CD4-positive, alpha-beta T cell (primary cell): ENCODE measurements at regions of chr19 and their contacts with region 1.

Region 1: GRCh38 chr19:39970675-39971379 is at the start of gene PSMC4:
- DNase-seq: peak; percentile 97 to 100 (median 98)
- ATAC-seq: peak; percentile 96
- H3K4me3 ChIP-seq: peak within 1 kb of the TSS; percentile 77
- H3K4me3 Mint-ChIP-seq: peak within 1 kb of the TSS; percentile 98
- H3K27ac ChIP-seq: peak within 1 kb of the TSS; percentile 87 to 91
- H3K27ac Mint-ChIP-seq: peak within 1 kb of the TSS; percentile 97
- H3K4me1 ChIP-seq: peaks cover 51% of the 10 kb centered on the region
- H3K4me1 Mint-ChIP-seq: peaks cover 58% of the 10 kb centered on the region
- H3K27me3 ChIP-seq: no peaks in the 10 kb centered on the region
- H3K27me3 Mint-ChIP-seq: no peaks in the 10 kb centered on the region
- CTCF ChIP-seq: peak; percentile 88
- total RNA-seq, gene PSMC4: 61.3 to 67.4 TPM

Region 2: DNA sequence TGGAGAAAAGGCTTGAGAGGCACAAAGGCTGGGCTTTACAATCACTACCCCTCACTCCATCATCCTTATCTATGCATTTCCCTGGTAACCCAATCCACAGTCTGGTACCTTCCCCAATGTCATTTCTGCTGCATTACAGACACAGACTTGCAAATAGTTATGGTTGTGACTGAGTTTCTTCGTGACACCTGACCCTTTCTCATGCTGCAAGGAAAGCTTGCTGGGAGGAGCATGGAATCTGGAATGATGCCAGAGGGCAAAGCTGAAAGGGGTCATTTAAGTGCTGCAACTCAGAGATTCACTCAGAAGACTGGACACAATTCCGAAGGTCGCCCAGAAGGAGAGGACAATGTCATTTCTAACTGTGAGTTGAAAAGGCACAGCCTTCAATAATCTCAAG is 315.2 kb before region 1 on chr19 and contains the start of gene LGALS16:
- CTCF ChIA-PET with region 1: no interaction called
- POLR2A ChIA-PET with region 1: no interaction called
- intact Hi-C with region 1: no loop called
- DNase-seq: no peak
- ATAC-seq: no peak
- H3K4me3 ChIP-seq: no peak within 1 kb of the TSS
- H3K4me3 Mint-ChIP-seq: no peak within 1 kb of the TSS
- H3K27ac ChIP-seq: no peak within 1 kb of the TSS
- H3K27ac Mint-ChIP-seq: no peak within 1 kb of the TSS
- H3K4me1 ChIP-seq: no peaks in the 10 kb centered on the region
- H3K4me1 Mint-ChIP-seq: no peaks in the 10 kb centered on the region
- H3K27me3 ChIP-seq: no peaks in the 10 kb centered on the region
- H3K27me3 Mint-ChIP-seq: peaks cover 67% of the 10 kb centered on the region
- CTCF ChIP-seq: no peak
- total RNA-seq, gene LGALS16: not detected

Region 3: GRCh38 chr19:39846176-39846677 is 124.6 kb before region 1 on chr19 and contains the start of gene FBL:
- CTCF ChIA-PET with region 1: interaction called, 11 read pairs
- POLR2A ChIA-PET with region 1: interaction called, 4 read pairs
- intact Hi-C with region 1: no loop called
- DNase-seq: peak; percentile 96 to 99 (median 98)
- ATAC-seq: peak; percentile 93
- H3K4me3 ChIP-seq: peak within 1 kb of the TSS; percentile 94
- H3K4me3 Mint-ChIP-seq: peak within 1 kb of the TSS; percentile 85
- H3K27ac ChIP-seq: peak within 1 kb of the TSS; percentile 87 to 89
- H3K27ac Mint-ChIP-seq: peak within 1 kb of the TSS; percentile 92
- H3K4me1 ChIP-seq: peaks cover 44% of the 10 kb centered on the region
- H3K4me1 Mint-ChIP-seq: peaks cover 55% of the 10 kb centered on the region
- H3K27me3 ChIP-seq: no peaks in the 10 kb centered on the region
- H3K27me3 Mint-ChIP-seq: no peaks in the 10 kb centered on the region
- CTCF ChIP-seq: no peak
- total RNA-seq, gene FBL: 267 to 287 TPM

Region 4: DNA sequence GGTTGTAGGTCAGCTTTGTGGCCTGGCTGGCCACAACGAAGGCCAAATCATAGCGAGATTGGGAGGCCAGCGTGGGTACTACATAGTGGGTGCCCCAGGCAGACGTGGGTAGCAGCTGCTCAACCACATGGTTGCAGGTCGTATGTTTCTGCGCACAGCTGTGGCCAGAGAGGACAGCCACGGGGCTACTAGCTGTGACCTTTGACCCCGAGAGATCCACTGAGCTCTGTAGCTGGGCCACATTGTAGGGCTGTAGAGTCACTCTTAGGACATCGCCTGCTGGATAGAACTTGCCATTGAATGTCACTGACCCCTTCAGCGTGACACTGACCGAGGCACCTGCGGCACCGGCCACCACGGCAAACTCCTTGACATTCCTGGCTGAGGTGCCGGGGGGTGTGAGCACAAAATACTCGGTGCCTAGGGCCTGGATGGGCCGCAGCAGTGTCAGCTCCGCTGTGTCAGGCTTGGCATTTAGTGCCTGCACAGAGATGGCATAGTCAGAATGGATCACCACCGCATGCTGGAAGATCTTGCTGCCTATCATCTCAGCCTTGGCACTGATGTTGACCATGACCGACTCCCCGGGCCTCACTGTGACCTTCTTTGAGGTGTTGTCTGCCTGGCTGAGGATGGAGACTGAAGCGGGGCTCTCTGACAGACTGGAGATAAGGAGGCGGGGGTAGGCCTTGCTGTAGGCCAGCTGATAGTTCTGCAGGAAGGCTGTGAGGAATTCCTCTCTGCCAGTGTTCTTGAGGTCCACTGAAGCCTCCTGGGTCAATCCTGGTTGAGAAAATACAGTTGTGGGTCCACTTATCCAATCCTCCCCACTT is 43.1 kb before region 1 on chr19:
- CTCF ChIA-PET with region 1: interaction called, 10 read pairs
- POLR2A ChIA-PET with region 1: interaction called, 12 read pairs
- intact Hi-C with region 1: loop called in 1 of 2 experiments (anchors 5 kb)
- DNase-seq: no peak
- ATAC-seq: no peak
- H3K4me3 ChIP-seq: no peak overlapping the region
- H3K4me3 Mint-ChIP-seq: no peak overlapping the region
- H3K27ac ChIP-seq: no peak overlapping the region
- H3K27ac Mint-ChIP-seq: peak overlapping the region; percentile 27
- H3K4me1 ChIP-seq: peaks cover 11% of the 10 kb centered on the region
- H3K4me1 Mint-ChIP-seq: peaks cover 46% of the 10 kb centered on the region
- H3K27me3 ChIP-seq: no peaks in the 10 kb centered on the region
- H3K27me3 Mint-ChIP-seq: no peaks in the 10 kb centered on the region
- CTCF ChIP-seq: no peak

Region 5: DNA sequence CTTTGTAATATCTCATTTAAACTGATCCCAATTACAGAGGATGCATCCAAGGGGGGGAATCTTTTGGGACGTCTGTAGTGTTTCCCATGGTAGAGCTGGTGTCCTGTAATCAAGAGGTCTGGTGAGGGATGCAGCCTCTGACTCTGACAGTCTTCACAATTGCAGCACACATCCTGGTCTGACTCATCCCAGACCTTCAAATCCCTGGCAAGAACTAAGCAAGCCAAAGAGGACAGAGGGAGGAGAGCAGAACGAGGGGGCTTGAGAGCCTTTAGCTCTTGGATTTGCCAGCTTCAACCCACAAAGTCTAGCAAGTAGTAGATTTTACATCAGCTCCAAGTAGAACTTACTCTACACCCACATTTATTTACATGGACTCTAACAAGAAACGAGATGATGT is 19.1 kb before region 1 on chr19:
- CTCF ChIA-PET with region 1: interaction called, 19 read pairs
- POLR2A ChIA-PET with region 1: interaction called, 172 read pairs
- intact Hi-C with region 1: no loop called
- DNase-seq: peak in 2 of 14 experiments; percentile 26 to 27
- ATAC-seq: no peak
- H3K4me3 ChIP-seq: peak overlapping the region; percentile 6
- H3K4me3 Mint-ChIP-seq: peak overlapping the region; percentile 86
- H3K27ac ChIP-seq: peak overlapping the region; percentile 77 to 84
- H3K27ac Mint-ChIP-seq: peak overlapping the region; percentile 91
- H3K4me1 ChIP-seq: peaks cover 81% of the 10 kb centered on the region
- H3K4me1 Mint-ChIP-seq: peaks cover 93% of the 10 kb centered on the region
- H3K27me3 ChIP-seq: no peaks in the 10 kb centered on the region
- H3K27me3 Mint-ChIP-seq: no peaks in the 10 kb centered on the region
- CTCF ChIP-seq: no peak

Region 6: GRCh38 chr19:40090241-40091204 is 119.7 kb after region 1 on chr19 and contains the start of gene ZNF780A:
- CTCF ChIA-PET with region 1: interaction called, 17 read pairs
- POLR2A ChIA-PET with region 1: interaction called, 23 read pairs
- intact Hi-C with region 1: no loop called
- DNase-seq: peak; percentile 61 to 86 (median 72)
- ATAC-seq: peak; percentile 96
- H3K4me3 ChIP-seq: peak within 1 kb of the TSS; percentile 81
- H3K4me3 Mint-ChIP-seq: peak within 1 kb of the TSS; percentile 100
- H3K27ac ChIP-seq: peak within 1 kb of the TSS; percentile 89 to 91
- H3K27ac Mint-ChIP-seq: peak within 1 kb of the TSS; percentile 99
- H3K4me1 ChIP-seq: peaks cover 6% of the 10 kb centered on the region
- H3K4me1 Mint-ChIP-seq: peaks cover 47% of the 10 kb centered on the region
- H3K27me3 ChIP-seq: peaks cover 5 to 7% of the 10 kb centered on the region in 2 experiments
- H3K27me3 Mint-ChIP-seq: peaks cover 10% of the 10 kb centered on the region
- CTCF ChIP-seq: no peak
- total RNA-seq, gene ZNF780A: 9.7 to 10.6 TPM

Region 7: DNA sequence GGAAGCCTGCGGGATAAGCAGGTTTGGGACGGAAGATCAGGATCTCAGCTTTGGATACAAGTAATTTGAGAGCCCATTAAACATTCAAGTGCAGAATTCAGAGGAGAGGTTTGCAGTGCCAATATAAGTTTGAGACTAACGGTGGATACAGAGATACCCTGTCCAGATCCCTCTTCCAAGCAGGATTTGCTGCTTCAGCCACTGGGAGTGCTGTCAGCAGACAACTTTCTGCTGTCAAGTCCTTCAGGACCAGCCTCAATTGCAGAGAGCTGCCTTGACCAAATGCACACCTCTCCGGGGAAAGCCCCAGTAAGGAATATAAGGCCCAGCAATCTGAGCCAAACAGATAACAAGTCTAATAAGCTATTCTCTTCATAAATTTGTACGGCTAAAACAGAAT is 166.0 kb after region 1 on chr19:
- CTCF ChIA-PET with region 1: no interaction called
- POLR2A ChIA-PET with region 1: no interaction called
- intact Hi-C with region 1: no loop called
- DNase-seq: no peak
- ATAC-seq: no peak
- H3K4me3 ChIP-seq: no peak overlapping the region
- H3K4me3 Mint-ChIP-seq: no peak overlapping the region
- H3K27ac ChIP-seq: no peak overlapping the region
- H3K27ac Mint-ChIP-seq: no peak overlapping the region
- H3K4me1 ChIP-seq: no peaks in the 10 kb centered on the region
- H3K4me1 Mint-ChIP-seq: peaks cover 9% of the 10 kb centered on the region
- H3K27me3 ChIP-seq: peaks cover 0 to 2% of the 10 kb centered on the region in 2 experiments
- H3K27me3 Mint-ChIP-seq: peaks cover 15% of the 10 kb centered on the region
- CTCF ChIP-seq: no peak